ENCODE measurements at regions of chr6 and their contacts with region 1.

Region 1: DNA sequence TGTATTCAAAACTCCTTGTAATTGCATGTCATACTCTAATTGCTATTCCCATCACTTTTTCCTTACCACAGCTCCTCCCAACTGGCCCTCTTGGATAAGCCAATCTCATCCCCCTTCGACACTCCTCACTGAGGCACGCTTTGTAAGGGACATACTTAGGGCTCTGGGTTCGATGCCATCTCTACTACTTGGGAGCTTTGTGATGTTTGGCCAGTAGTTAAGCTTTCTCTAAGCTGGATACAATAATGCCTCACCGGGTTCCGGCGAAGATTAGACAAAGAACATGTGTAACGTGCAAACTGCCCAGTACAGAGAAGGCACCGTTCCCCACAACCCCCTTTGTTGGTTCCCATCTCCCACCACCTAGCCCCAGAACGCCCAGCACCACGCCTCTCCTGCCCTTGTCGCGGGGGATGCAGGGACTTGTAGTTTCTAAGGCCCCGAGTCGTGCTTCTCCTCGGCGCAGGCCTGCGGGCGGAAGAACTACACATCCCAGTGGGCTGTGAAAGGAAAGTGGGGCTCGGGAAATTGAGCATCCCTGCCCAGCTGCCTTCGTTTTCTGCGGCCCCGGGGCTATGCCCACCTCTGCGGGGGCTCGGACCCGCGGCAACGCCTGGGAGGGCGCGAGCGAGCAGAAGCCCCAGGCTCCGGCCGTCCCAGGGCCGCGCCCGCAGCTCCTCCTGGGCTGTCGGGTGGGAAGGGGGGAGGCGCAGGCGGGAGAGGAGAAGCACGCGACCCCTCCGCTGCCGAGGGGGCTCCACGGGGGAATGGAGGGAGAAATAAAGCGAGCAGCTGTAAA is 1.1 kb upstream of the ZDHHC14 start:
- DNase-seq: peak; percentile 90
- ATAC-seq: peak; percentile 94
- H3K4me3 ChIP-seq: peak overlapping the region; percentile 91 to 95 (median 92)
- H3K27ac ChIP-seq: peak overlapping the region; percentile 56
- H3K4me1 ChIP-seq: peaks cover 47% of the 10 kb centered on the region
- H3K27me3 ChIP-seq: no peaks in the 10 kb centered on the region; a peak in 1 of 5 replicates
- CTCF ChIP-seq: peak; percentile 19; the same call in 1 of the 2 replicates
- EP300 ChIP-seq: no peak
- POLR2A ChIP-seq: peak in 1 of 2 experiments; percentile 49; a peak in 2 of 4 replicates
- RAD21 ChIP-seq: no peak

Region 2: GRCh38 chr6:157314705-157315321 is 65.0 kb before region 1 on chr6:
- CTCF ChIA-PET with region 1: interaction called, 5 read pairs
- POLR2A ChIA-PET with region 1: no interaction called
- in situ Hi-C with region 1: no loop called
- intact Hi-C with region 1: loop called (anchors 2 kb)
- DNase-seq: peak; percentile 76
- ATAC-seq: peak; percentile 87
- H3K4me3 ChIP-seq: no peak overlapping the region
- H3K27ac ChIP-seq: no peak overlapping the region
- H3K4me1 ChIP-seq: peaks cover 8% of the 10 kb centered on the region; the same call in 1 of the 2 replicates
- H3K27me3 ChIP-seq: no peaks in the 10 kb centered on the region
- CTCF ChIP-seq: peak; percentile 83
- EP300 ChIP-seq: no peak
- POLR2A ChIP-seq: no peak
- RAD21 ChIP-seq: peak; percentile 91

Region 3: DNA sequence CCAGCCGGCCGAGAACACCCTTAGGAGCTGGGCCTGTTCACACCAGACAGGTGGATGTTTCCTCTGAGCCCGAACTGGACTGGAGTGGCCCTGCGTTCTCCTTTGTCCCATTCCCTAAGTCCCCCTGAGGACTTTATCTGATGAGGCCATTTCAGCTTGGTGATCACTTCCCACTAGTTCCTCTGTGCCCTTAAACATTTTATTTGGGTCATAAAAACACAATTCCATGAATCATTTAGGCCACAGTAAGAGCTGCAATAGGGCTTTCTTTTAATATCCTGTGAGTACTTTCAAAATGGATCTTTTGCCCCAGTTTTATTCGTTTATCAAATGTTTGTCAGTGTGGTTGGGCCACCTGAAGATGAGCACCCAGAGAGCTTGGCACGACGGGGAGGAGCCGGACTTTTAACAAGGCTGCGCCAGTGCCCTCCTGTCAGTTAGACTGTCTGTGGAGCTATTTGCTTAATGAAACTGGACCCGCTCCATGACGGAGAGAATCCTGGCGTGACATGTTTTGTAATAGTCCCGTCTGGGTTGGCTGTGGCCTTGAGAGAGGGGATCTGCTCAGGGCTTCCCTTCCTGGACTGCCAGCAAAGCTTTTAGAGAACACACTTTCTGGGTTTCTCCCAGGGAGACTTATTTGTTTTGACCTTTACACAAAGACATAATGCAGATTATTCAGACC is 54.6 kb after region 1 on chr6:
- CTCF ChIA-PET with region 1: no interaction called
- POLR2A ChIA-PET with region 1: interaction called, 4 read pairs
- in situ Hi-C with region 1: no loop called
- intact Hi-C with region 1: loop called (anchors 5 kb)
- DNase-seq: peak; percentile 90
- ATAC-seq: peak; percentile 95
- H3K4me3 ChIP-seq: peak overlapping the region in 1 of 3 experiments; percentile 29; a peak in 2 of 6 replicates
- H3K27ac ChIP-seq: peak overlapping the region; percentile 38
- H3K4me1 ChIP-seq: peaks cover 26% of the 10 kb centered on the region
- H3K27me3 ChIP-seq: no peaks in the 10 kb centered on the region
- CTCF ChIP-seq: no peak
- EP300 ChIP-seq: peak in 1 of 2 experiments; percentile 61; a peak in 2 of 4 replicates
- POLR2A ChIP-seq: no peak
- RAD21 ChIP-seq: no peak; the same call in 1 of the 2 replicates

Region 4: DNA sequence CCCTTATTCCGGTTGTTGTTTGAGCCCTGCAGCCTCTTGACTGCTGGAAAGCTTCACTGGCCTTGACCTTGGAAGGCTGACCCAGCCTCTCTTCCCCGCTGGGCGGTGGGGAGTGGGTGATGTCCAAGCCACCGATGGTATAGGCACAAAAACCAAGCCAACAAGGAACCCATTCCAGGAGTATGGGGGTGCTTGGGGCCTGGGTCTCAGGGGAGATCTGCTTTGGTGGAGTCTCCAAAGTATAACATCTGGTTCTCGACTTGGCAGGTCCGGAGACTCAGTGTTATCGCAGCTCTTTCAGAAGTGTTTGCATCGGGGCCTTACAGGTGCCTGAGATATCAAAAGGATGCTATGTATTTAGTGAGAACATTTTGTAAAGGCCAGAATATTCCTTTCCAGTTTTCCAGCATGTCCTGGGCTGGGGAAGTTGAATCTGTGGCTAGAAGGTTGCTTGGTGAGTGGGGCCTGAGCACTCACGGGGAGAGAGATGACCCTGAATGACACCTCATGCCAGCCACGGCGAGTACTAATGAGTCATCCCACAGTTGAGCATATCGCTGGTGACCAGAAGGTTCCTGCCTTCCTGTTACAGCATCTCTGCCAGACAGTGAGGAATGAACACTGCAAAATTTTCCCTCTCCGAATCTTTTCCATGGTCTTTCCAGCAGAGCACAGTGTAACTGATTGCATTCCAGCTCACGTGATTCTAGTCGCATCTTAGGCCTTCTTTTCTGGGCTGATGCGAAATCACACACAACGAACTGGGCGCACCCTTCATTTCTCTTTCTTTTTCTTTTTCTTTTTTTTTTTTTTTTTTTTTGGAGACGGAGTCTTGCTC is 135.0 kb after region 1 on chr6:
- CTCF ChIA-PET with region 1: no interaction called
- POLR2A ChIA-PET with region 1: interaction called, 6 read pairs
- in situ Hi-C with region 1: no loop called
- intact Hi-C with region 1: loop called (anchors 5 kb)
- DNase-seq: peak; percentile 75
- ATAC-seq: peak; percentile 61
- H3K4me3 ChIP-seq: no peak overlapping the region
- H3K27ac ChIP-seq: peak overlapping the region; percentile 22
- H3K4me1 ChIP-seq: peaks cover 83% of the 10 kb centered on the region
- H3K27me3 ChIP-seq: no peaks in the 10 kb centered on the region
- CTCF ChIP-seq: no peak
- EP300 ChIP-seq: peak in 1 of 2 experiments; percentile 53; a peak in 1 of 4 replicates
- POLR2A ChIP-seq: no peak
- RAD21 ChIP-seq: no peak

Region 5: DNA sequence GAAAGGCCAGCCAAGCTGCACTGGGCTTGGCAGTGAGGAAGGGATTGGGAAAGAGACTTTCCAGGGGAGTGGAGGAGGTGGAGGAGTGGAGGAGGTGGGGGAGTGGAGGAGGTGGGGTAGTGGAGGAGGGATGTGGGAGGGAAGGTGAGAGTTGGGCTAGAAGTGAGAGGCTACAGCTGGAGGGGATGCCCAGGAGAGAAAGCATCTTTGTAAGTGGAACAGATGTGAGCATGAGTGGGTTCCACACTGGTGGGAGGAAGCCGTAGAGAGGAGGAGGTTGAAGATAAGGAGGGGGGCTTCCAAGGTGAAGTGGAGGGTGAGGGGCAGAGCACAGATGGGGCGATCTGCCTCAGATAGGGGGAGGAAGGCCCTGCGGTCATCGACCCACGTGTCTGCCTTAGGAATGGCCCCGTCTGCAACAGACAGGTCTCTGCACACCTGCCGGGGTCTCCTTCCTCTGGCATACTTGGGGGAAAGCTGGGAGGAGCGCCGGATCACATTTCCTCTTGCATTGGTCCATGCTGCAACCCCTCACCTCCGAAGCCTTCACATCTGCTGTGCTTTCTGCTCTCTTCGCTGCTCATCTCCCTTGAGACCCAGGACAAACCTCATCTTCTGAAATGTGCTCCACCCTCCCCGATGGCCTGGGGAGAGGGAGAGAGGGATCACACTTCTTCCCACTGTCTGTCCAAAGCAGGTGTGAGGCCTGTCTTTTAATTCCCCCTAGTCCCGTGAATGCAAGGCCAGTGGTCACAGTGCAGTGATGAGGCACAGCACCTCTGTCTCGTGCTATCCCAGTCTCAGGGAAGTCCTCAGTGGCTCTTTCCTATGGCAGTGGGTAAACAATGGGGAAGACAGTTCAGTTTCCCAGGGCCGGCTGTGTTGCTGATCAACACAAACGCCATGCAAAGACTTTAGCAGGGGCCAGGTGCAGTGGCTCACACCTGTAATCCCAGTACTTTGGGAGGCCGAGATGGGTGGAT is 394.6 kb after region 1 on chr6:
- CTCF ChIA-PET with region 1: no interaction called
- POLR2A ChIA-PET with region 1: no interaction called
- in situ Hi-C with region 1: no loop called
- intact Hi-C with region 1: no loop called
- DNase-seq: no peak
- ATAC-seq: peak; percentile 49
- H3K4me3 ChIP-seq: no peak overlapping the region
- H3K27ac ChIP-seq: no peak overlapping the region
- H3K4me1 ChIP-seq: peaks cover 24% of the 10 kb centered on the region
- H3K27me3 ChIP-seq: peaks cover 2 to 19% of the 10 kb centered on the region in 2 experiments; a peak in 4 of 5 replicates
- CTCF ChIP-seq: no peak
- EP300 ChIP-seq: no peak
- POLR2A ChIP-seq: no peak
- RAD21 ChIP-seq: no peak